WTC11 (cell line): ENCODE measurements at regions of chr13 and their contacts with region 1.

Region 1: GRCh38 chr13:19772306-19772705 is 10.4 kb downstream of the PSPC1 start:
- DNase-seq: no peak
- ATAC-seq: no peak
- H3K4me3 Mint-ChIP-seq: no peak overlapping the region
- H3K27ac Mint-ChIP-seq: peak overlapping the region; percentile 40; the same call in 1 of the 2 replicates
- H3K4me1 Mint-ChIP-seq: peaks cover 12% of the 10 kb centered on the region
- H3K27me3 Mint-ChIP-seq: no peaks in the 10 kb centered on the region
- CTCF ChIP-seq: no peak

Region 2: DNA sequence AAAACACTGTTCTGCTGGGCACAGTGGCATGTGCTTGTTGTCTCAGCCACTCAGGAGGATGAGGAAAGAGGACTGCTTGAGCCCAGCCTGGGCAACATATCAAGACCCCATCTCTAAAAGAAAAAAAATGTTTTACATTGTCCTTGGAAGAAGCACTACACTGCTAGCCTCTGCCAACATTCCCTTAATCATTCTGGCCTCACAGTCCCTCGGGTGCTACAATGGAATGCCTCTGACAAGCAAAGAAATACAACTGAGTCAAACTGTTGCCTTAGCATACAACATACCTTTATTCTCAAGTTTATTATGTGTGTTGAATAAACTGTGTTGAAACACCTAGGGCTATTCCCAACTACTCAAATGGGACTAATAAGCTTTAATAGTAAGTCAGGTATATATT is 45.7 kb before region 1 on chr13:
- CTCF ChIA-PET with region 1: no interaction called
- POLR2A ChIA-PET with region 1: no interaction called
- DNase-seq: no peak
- ATAC-seq: no peak
- H3K4me3 Mint-ChIP-seq: no peak overlapping the region
- H3K27ac Mint-ChIP-seq: no peak overlapping the region
- H3K4me1 Mint-ChIP-seq: no peaks in the 10 kb centered on the region
- H3K27me3 Mint-ChIP-seq: no peaks in the 10 kb centered on the region
- CTCF ChIP-seq: no peak

Region 3: DNA sequence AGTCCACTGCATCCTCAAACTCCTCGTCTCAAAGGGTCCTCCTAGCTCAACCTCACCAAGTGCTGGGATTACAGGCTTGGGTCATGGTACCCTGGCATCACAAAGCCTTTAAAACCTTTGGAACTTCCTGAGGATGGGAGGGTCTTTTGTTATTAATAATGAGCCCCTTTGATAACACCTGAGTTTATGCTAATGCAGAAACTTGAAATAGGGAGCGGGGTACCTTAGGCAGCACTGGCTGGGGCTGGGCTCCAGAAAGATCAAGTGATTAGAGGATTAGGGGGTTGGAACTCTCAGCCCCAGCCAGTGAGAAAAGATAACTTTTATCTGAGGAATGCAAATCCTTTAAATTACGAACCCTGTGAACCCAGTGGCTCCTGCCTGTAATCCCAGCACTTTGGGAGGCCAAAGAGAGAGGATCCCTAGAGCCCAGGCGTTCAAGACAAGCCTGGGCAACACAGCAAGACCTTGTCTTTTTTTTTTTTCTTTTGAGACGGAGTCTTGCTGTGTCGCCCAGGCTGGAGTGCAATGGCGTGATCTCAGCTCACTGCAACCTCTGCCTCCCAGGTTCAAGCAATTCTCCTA is 19.7 kb after region 1 on chr13:
- CTCF ChIA-PET with region 1: no interaction called
- POLR2A ChIA-PET with region 1: no interaction called
- DNase-seq: no peak
- ATAC-seq: peak; percentile 70
- H3K4me3 Mint-ChIP-seq: no peak overlapping the region
- H3K27ac Mint-ChIP-seq: peak overlapping the region; percentile 41; the same call in 1 of the 2 replicates
- H3K4me1 Mint-ChIP-seq: peaks cover 19% of the 10 kb centered on the region
- H3K27me3 Mint-ChIP-seq: no peaks in the 10 kb centered on the region
- CTCF ChIP-seq: no peak

Region 4: DNA sequence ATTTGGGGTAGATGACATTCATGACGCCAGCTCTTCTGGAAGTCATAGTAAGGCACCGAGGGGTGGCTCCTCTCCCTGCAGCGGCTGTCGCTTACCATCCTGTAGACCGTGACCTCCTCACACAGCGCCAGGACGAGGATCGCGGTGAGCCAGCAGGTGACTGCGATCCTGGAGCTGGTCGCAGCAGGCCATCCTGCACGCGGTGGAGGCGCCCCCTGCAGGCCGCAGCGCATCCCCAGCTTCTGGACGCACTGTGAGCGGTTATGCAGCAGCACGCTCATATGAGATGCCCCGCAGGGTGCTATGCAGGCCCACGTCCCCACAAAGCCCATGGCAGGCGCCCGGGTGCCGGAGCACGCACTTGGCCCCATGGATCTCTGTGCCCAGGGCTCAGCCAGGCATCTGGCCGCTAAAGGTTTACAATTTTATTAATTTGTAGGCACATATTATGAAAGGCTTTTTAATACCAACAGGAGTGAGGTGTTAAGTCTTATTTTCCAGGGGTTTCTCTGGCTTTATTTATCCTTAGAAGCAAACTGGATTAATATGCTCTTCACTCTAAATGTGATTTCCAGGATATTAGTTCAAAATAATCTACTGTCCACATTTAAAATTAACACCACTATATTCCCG is 46.0 kb after region 1 on chr13:
- CTCF ChIA-PET with region 1: interaction called, 15 read pairs
- POLR2A ChIA-PET with region 1: no interaction called
- DNase-seq: peak; percentile 95
- ATAC-seq: peak; percentile 99
- H3K4me3 Mint-ChIP-seq: no peak overlapping the region
- H3K27ac Mint-ChIP-seq: no peak overlapping the region; the same call in 1 of the 2 replicates
- H3K4me1 Mint-ChIP-seq: peaks cover 7% of the 10 kb centered on the region
- H3K27me3 Mint-ChIP-seq: no peaks in the 10 kb centered on the region
- CTCF ChIP-seq: peak; percentile 88